ENCODE measurements at regions of chr1 and their contacts with region 1.

Region 1: DNA sequence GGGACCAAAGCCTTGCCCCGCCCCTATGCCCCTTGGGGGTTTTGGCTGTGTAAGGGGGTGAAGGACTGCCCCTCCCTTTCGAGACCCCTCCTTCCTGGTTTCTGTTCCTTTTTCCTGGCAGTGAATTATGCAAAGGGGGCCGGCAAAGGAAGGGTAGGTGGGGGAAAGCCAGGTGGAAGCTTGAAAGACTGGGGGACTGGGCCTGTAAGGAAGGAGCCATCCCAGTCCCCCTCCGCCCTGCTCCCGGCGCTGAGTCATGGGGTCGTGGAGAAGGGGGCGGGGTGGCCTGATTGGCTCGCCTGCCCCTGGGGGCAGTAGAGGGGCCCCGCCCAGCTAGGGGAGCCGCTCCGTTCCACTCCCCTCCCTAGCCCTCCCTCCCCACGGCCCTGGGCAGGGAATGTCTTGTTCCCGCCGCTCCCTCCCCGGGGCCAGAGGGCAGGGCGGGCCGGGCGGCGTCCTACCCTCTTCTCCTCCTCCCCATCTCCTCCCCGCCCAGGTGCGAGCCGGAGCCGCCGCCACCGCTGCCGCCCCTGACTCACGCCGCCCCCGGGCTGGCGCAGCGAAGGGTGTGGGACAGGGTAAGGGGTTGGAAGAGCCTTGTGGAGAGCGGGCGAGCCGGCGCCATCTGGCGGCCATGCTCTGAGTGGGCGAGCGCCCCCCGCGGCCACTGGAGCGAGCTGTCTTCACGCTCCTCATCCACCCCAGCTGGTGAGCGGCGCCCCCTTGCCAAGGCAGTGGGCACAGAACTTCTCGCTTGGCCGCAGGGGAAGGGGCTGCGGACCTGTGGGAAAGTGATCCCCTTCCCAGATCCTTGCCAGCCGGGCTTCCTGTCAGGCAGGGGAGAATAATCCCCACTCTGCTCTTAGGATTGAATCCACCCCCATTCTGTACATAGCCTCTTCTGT is 14.7 kb downstream of the ZBTB7B start:
- H3K4me3 ChIP-seq: peak overlapping the region; percentile 31
- H3K27ac ChIP-seq: peak overlapping the region; percentile 48
- H3K4me1 ChIP-seq: peaks cover 7% of the 10 kb centered on the region
- CTCF ChIP-seq: peak; percentile 100

Region 2: GRCh38 chr1:154992721-154993571 is 24.3 kb before region 1 on chr1:
- CTCF ChIA-PET with region 1: interaction called, 14 read pairs
- POLR2A ChIA-PET with region 1: interaction called, 7 read pairs
- H3K4me3 ChIP-seq: no peak overlapping the region
- H3K27ac ChIP-seq: no peak overlapping the region
- H3K4me1 ChIP-seq: no peaks in the 10 kb centered on the region
- CTCF ChIP-seq: peak; percentile 71

Region 3: DNA sequence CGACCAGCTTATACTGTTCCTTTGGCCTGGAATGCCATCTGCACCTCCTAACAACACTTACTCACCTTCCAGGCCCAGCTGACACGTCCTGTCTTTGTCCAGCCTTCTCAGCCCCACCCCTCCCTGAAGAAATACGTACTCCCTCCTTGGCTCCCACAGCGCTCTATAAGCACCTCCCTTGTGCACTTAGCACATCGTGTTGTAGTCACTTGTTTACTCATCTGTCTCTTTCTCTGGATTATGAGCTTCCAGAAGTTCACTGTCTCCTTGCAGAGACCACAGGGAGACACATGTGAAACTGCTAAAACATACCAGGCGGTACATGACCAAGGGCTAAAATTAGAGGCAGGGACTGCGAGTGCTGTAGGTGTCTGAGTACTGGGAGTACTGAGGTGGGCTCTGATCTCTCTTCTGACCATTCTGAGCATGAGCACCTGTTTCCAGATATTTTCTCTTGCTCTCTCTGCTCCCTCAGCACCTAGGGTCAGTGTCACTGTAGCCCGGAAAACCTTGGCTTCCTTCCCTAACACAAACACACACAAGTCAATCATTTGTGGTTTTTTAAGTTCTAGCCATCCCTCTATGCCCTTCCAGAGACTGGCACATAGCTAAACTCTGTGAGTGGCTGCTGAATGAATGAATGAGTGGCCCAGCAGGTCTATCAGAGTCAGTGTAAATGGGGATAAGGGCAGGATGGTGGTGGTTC is 21.5 kb after region 1 on chr1:
- CTCF ChIA-PET with region 1: interaction called, 38 read pairs
- POLR2A ChIA-PET with region 1: no interaction called
- H3K4me3 ChIP-seq: no peak overlapping the region
- H3K27ac ChIP-seq: no peak overlapping the region
- H3K4me1 ChIP-seq: no peaks in the 10 kb centered on the region
- CTCF ChIP-seq: no peak

Region 4: DNA sequence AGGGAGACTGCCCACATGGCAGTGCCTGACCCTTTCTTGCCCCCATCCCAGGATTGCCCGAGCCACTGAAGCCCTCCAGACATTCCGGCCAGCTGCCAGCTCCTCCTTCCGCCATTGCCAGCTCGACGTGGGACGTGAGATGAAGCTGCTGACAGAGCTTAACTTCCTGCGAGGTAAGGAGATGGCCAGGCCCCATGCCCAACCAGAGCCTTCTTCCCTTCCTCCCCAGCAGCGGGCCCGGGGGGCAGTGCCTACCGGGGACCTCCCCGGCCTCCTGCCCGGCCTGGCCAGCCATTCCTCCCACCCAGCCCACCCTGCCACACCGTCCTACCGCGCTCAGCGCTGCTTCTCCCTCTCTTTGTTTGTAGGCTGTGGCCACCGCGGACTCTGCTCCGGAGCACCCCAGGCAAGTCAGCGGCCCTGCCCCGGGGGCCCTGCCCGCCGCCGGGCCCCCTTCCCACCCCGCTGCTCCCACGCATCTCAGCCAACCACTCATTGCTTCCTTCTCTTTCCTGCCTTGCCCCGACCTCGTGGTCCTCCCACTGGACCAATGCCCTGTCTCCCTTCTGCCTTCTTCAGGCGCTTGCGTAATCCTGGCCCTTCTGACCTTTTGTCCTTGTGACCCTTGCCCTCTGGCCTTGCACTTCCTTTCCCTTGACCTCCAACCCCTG is 161.3 kb after region 1 on chr1:
- CTCF ChIA-PET with region 1: no interaction called
- POLR2A ChIA-PET with region 1: no interaction called
- H3K4me3 ChIP-seq: no peak overlapping the region
- H3K27ac ChIP-seq: no peak overlapping the region
- H3K4me1 ChIP-seq: no peaks in the 10 kb centered on the region
- CTCF ChIP-seq: no peak